H1 (cell line): ENCODE measurements at regions of chr19 and their contacts with region 1.

Region 1: DNA sequence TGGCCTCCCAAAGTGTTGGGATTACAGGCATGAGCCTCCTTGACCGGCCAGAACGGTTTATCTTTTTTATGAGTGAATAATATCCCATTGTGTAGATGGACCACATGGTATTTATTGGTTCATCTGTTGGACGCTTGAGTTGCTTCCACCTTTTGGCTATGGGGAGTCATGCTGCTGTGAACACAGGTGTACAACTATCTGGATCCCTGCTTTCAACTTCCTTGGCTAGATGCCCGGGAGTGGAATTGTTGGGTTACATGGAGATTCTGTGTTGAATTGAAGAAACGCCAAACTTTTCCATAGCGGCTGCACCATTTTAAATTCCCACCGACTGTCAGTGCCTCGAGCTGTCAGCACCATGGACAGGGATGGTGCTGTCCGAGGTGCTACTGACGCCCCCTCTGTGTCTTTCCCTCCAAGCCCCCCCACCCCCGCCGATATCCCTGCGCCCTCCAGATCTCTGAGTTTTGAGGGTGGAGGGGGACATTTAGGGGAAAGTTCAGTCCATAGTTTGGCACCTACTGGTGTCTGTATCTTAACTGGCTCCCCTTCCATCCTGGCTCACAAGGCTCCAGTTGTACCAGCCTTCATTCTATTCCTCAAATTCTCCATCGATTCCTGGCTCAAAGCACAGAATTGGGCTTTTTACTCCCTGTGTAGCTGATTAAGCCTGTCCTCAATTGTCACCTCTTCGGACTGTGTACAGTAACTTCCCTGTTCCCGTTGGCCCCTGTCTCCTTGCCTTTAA is 27.3 kb downstream of the PNPLA6 start:
- DNase-seq: peak in 1 of 2 experiments; percentile 75
- H3K4me3 ChIP-seq: no peak overlapping the region
- H3K27ac ChIP-seq: no peak overlapping the region
- H3K4me1 ChIP-seq: no peaks in the 10 kb centered on the region
- H3K27me3 ChIP-seq: no peaks in the 10 kb centered on the region
- CTCF ChIP-seq: no peak
- EP300 ChIP-seq: no peak
- POLR2A ChIP-seq: no peak
- RAD21 ChIP-seq: no peak

Region 2: GRCh38 chr19:7509619-7510018 is 53.2 kb before region 1 on chr19:
- CTCF ChIA-PET with region 1: no interaction called
- POLR2A ChIA-PET with region 1: no interaction called
- DNase-seq: peak in 1 of 2 experiments; percentile 67
- H3K4me3 ChIP-seq: no peak overlapping the region
- H3K27ac ChIP-seq: no peak overlapping the region
- H3K4me1 ChIP-seq: peaks cover 0 to 16% (median 12%) of the 10 kb centered on the region in 4 experiments; a peak in 5 of 7 replicates
- H3K27me3 ChIP-seq: peaks cover 0 to 6% (median 4%) of the 10 kb centered on the region in 4 experiments; a peak in 1 of 7 replicates
- CTCF ChIP-seq: no peak
- EP300 ChIP-seq: no peak
- POLR2A ChIP-seq: no peak
- RAD21 ChIP-seq: no peak

Region 3: DNA sequence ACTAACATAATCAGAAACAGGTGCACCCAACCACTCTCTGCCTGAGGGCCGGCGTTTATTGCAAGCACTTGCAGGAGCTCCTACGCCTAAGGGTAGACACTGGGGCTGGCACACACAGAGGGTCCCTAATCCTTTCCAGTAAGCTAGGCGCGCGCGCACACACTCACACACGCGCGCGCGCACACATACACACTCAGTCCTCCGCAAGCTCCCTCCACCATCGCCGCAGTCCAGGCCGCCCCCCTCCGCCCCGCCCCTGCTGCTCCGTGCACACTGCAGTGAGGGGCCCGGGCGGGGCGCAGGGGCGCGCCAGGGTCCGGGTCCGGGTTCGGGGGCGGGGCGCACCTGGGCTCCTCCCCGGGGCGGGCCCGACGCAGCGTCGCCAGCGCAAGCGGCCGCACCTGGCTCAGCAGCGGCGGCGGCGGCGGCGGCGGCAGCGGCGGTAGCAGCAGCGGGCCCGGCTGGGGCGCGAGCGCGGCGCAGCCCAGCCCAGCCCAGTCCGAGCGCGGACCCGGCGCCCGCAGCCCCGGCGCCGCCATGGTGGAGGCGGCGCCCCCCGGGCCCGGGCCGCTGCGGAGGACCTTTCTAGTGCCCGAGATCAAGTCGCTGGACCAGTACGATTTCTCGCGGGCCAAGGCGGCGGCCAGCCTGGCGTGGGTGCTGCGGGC is 32.8 kb after region 1 on chr19 and contains the start of gene CAMSAP3:
- CTCF ChIA-PET with region 1: interaction called, 27 read pairs
- POLR2A ChIA-PET with region 1: no interaction called
- DNase-seq: peak; percentile 31 to 91
- H3K4me3 ChIP-seq: peak within 1 kb of the TSS; percentile 47 to 96 (median 65)
- H3K27ac ChIP-seq: no peak within 1 kb of the TSS
- H3K4me1 ChIP-seq: peaks cover 0 to 11% (median 6%) of the 10 kb centered on the region in 4 experiments; a peak in 5 of 7 replicates
- H3K27me3 ChIP-seq: no peaks in the 10 kb centered on the region
- CTCF ChIP-seq: no peak
- EP300 ChIP-seq: no peak
- POLR2A ChIP-seq: no peak
- RAD21 ChIP-seq: no peak
- total RNA-seq, gene CAMSAP3: 30.4 and 32.5 TPM in 2 replicates

Region 4: DNA sequence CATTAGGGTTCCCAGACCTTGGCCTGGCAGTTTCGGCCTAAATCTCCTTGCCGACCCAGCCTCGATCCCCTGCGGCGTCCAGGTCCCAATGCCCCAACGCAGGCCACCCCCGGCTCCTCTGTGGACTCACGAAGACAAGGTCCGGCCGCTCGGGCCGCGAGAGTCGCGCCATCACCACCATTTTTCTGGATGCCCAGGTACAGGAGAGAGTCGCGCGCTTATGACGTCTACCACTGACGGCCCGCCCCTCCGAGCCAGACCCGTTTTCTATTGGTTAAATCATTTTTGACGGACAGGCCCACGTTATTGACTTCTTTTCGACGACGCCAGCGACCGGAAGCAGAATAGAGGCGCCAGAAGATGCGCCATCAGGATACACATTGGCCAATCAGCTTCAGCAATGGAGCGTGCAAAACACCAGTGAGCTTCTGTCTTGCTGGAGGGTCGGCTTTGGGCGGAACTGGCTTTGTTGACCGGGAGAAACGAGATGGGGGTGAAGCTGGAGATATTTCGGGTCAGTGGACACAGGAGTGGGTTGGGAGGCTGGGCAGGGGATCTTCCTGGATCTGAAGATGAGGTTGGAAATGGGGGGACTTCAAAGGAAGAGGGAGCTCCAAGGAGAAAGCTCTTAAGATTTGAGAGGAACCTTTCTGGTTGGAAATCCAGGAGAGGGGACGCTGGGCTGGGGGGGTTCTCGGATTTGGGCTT is 66.7 kb after region 1 on chr19 and contains the starts of genes PET100 and XAB2:
- CTCF ChIA-PET with region 1: interaction called, 10 read pairs
- POLR2A ChIA-PET with region 1: interaction called, 3 read pairs
- DNase-seq: peak; percentile 95 to 96
- H3K4me3 ChIP-seq: peak within 1 kb of the TSS; percentile 94 to 100 (median 99)
- H3K27ac ChIP-seq: peak within 1 kb of the TSS; percentile 88
- H3K4me1 ChIP-seq: peaks cover 0 to 10% (median 3%) of the 10 kb centered on the region in 4 experiments; a peak in 4 of 7 replicates
- H3K27me3 ChIP-seq: no peaks in the 10 kb centered on the region; a peak in 2 of 7 replicates
- CTCF ChIP-seq: no peak
- EP300 ChIP-seq: no peak
- POLR2A ChIP-seq: peak; percentile 64 to 77; a peak in 2 of 3 replicates
- RAD21 ChIP-seq: no peak
- total RNA-seq, gene PET100: 105 and 127 TPM in 2 replicates
- total RNA-seq, gene XAB2: 49.4 and 51.4 TPM in 2 replicates

Region 5: DNA sequence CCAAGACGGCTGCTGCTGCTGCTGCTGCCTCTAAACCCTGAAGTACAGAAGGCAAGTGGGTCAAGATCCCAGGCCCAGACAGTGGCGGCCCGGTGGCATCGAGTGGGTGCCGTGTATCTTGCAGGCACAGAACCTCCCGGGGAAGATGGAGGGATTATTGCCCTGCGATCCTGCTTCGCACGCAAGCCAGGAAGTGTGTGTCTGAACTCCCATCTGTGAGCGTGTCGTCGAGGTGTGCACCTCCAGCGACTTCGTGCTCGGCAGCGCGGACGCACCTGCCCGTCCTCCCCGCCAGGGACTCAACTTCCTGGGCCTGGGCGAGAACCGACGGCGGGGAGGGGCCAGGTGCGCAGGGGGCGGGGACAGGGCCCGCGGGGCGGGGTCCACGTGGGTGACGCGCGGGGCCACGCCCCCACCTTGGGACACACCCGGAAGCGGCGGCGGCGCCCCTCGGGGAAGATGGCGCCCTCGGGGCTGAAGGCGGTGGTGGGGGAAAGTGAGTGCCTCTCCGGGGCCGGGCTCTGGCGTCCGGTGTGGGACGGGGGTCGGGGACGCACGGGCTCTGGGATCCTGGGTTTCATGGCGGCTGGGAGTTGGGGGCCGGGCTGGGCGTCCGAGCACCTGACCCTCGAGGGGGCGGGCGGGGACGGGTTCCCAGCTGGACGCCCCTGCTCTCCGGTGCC is 74.0 kb after region 1 on chr19 and contains the start of gene STXBP2:
- CTCF ChIA-PET with region 1: interaction called, 11 read pairs
- POLR2A ChIA-PET with region 1: no interaction called
- DNase-seq: peak; percentile 64 to 97
- H3K4me3 ChIP-seq: peak within 1 kb of the TSS; percentile 67 to 88 (median 68)
- H3K27ac ChIP-seq: 0 out of 2 replicates have a peak within 1 kb of the TSS, but pooled peaks have one; percentile 23
- H3K4me1 ChIP-seq: peaks cover 0 to 6% (median under 1%) of the 10 kb centered on the region in 4 experiments; a peak in 3 of 7 replicates
- H3K27me3 ChIP-seq: peaks cover 3 to 19% (median 16%) of the 10 kb centered on the region in 4 experiments
- CTCF ChIP-seq: peak in 1 of 3 experiments; percentile 6; a peak in 1 of 4 replicates
- EP300 ChIP-seq: no peak
- POLR2A ChIP-seq: peak in 1 of 2 experiments; percentile 69; a peak in 1 of 3 replicates
- RAD21 ChIP-seq: peak in 1 of 2 experiments; percentile 16; a peak in 1 of 4 replicates
- total RNA-seq, gene STXBP2: 51.5 and 52.9 TPM in 2 replicates

Region 6: GRCh38 chr19:7692417-7693088 is 129.7 kb after region 1 on chr19:
- CTCF ChIA-PET with region 1: no interaction called
- POLR2A ChIA-PET with region 1: no interaction called
- DNase-seq: no peak
- H3K4me3 ChIP-seq: no peak overlapping the region
- H3K27ac ChIP-seq: no peak overlapping the region
- H3K4me1 ChIP-seq: peaks cover 0 to 10% (median 4%) of the 10 kb centered on the region in 4 experiments; a peak in 4 of 7 replicates
- H3K27me3 ChIP-seq: no peaks in the 10 kb centered on the region; a peak in 2 of 7 replicates
- CTCF ChIP-seq: no peak
- EP300 ChIP-seq: no peak
- POLR2A ChIP-seq: no peak
- RAD21 ChIP-seq: no peak

Region 7: DNA sequence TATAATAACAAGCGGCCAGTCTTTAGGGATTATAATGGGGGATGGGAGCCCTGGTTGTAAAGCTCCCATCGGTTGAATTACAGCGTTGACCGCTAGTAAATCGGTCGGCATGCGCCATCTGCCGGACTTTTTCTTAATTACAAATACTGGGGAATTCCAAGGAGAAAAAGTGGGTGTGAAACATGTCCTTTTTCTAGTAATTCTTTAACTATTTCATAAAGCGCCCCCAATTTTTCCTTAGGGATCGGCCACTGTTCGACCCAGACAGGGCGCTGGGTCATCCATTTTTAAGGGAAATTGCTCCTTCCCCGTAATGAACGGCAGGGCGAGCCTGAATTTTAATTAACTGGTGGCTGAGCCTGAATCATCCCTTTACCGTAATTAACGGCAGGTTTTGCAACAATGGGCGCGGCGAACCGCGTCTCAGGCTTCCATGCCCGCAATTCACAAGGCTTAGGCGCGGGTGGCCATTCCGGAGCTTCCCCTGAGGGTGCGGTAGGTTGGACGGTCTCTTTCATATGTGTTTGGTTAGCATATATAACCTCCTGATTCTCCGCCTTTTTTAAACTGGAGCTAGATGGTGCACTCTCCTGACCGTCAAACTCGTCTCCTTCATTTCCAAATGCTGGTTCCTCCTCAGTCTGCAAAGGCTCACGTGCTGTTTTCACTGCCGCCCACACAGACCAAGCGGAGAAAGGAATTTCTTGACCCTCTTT is 237.0 kb after region 1 on chr19:
- CTCF ChIA-PET with region 1: interaction called, 17 read pairs
- POLR2A ChIA-PET with region 1: no interaction called
- DNase-seq: peak; percentile 41 to 88
- H3K4me3 ChIP-seq: peak overlapping the region; percentile 23 to 55 (median 32); a peak in 7 of 8 replicates
- H3K27ac ChIP-seq: no peak overlapping the region
- H3K4me1 ChIP-seq: peaks cover 0 to 3% (median 1%) of the 10 kb centered on the region in 4 experiments; a peak in 2 of 7 replicates
- H3K27me3 ChIP-seq: peaks cover 0 to 2% (median 0%) of the 10 kb centered on the region in 4 experiments; a peak in 1 of 7 replicates
- CTCF ChIP-seq: peak in 2 of 3 experiments; percentile 44 to 68; a peak in 3 of 4 replicates
- EP300 ChIP-seq: no peak
- POLR2A ChIP-seq: 0 out of 3 replicates have a peak, but pooled peaks of 1 of the 2 experiments have one; percentile 47
- RAD21 ChIP-seq: peak; percentile 76 to 79

Region 8: GRCh38 chr19:7829561-7830271 is 266.9 kb after region 1 on chr19 and contains the start of gene EVI5L:
- CTCF ChIA-PET with region 1: interaction called, 10 read pairs
- POLR2A ChIA-PET with region 1: no interaction called
- DNase-seq: peak; percentile 99 to 100
- H3K4me3 ChIP-seq: peak within 1 kb of the TSS; percentile 50 to 69 (median 61)
- H3K27ac ChIP-seq: no peak within 1 kb of the TSS
- H3K4me1 ChIP-seq: peaks cover 0 to 8% (median 6%) of the 10 kb centered on the region in 4 experiments; a peak in 5 of 7 replicates
- H3K27me3 ChIP-seq: peaks cover 0 to 3% (median 2%) of the 10 kb centered on the region in 4 experiments; a peak in 1 of 7 replicates
- CTCF ChIP-seq: no peak
- EP300 ChIP-seq: no peak
- POLR2A ChIP-seq: no peak
- RAD21 ChIP-seq: no peak
- total RNA-seq, gene EVI5L: 10.4 and 11.0 TPM in 2 replicates